Astrocyte of the cerebellum (primary cell): ENCODE measurements at regions of chr18 and their contacts with region 1.

Region 1: DNA sequence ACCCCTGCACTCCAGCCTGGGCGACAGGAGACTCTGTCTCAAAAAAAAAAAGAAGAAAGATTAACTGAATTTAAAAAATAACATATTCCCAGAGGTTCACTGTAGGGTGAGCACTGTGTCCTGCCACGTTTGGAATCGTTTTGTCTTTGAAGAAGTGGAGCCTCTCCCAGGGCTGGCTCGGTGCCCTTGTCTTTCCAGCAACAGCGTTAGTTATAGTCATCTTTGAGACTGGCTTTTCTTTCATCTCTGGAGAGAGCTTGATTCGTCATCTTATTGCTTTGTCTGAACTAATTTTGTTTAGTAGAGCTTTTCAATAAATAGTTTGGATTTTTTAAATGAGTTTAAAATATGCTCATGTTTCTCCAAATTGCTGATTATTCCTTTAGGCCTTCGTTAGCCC is 50.5 kb downstream of the IMPA2 start:
- DNase-seq: peak; percentile 82
- H3K4me3 ChIP-seq: no peak overlapping the region
- CTCF ChIP-seq: no peak

Region 2: DNA sequence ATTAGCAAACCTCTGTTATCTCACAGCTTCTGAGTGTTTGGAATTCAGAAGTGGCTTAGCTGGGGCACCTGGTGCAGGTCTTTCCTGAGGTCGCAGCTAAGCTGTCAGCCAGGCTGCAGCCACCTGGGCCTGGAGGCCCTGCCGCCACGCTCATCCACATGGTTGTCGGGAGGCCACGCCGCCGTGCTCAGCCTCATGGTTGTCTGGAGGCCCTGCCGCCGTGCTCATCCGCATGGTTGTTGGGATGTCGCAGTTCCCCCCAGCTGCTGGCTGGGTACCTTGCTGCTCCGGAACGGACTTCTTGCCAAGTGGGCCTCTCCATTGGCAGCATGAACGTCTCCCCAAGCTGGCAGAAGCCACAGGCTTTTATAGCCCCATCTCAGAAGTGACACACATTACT is 99.5 kb before region 1 on chr18:
- in situ Hi-C with region 1: loop called (anchors 5 kb)
- DNase-seq: no peak
- H3K4me3 ChIP-seq: no peak overlapping the region
- CTCF ChIP-seq: no peak

Region 3: GRCh38 chr18:11995445-11996189 is 36.2 kb before region 1 on chr18:
- in situ Hi-C with region 1: no loop called
- DNase-seq: peak; percentile 48
- H3K4me3 ChIP-seq: no peak overlapping the region
- CTCF ChIP-seq: peak; percentile 82